Posterior vena cava (tissue), 2 donors: ENCODE measurements at regions of chr4 and their contacts with region 1.

Region 1: GRCh38 chr4:11073621-11074051 is 355.1 kb downstream of the HS3ST1 start:
- DNase-seq: peak; percentile 86

Region 2: DNA sequence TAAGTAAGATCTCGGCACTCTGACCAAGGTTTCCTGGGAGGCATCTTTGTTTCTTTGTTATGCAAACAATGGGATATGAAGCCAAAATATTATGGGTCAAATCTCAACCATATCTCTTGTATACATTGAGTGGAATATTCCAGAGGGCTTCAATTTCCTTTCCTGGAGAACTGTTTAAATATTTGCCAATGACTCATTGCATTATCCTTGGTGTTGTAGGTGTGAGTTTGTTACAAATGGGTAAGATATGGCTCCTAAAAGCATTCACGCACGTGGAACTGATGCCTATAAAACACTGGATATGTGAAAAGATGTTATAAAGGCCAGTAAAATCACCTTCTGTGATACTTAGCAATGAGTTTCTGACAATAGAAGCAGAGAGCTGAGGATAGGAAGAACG is 806.6 kb before region 1 on chr4:
- intact Hi-C with region 1: loop called in 1 of 2 experiments (anchors 5 kb)
- DNase-seq: no peak

Region 3: GRCh38 chr4:11724731-11725130 is 651.1 kb after region 1 on chr4:
- intact Hi-C with region 1: no loop called
- DNase-seq: no peak